ENCODE measurements at regions of chr1 and their contacts with region 1.

Region 1: GRCh38 chr1:214328770-214329469 is 48.0 kb downstream of the SMYD2 start:
- DNase-seq: peak; percentile 68
- H3K4me3 Mint-ChIP-seq: no peak overlapping the region
- H3K27ac Mint-ChIP-seq: no peak overlapping the region
- H3K4me1 Mint-ChIP-seq: peaks cover 15% of the 10 kb centered on the region
- H3K27me3 Mint-ChIP-seq: no peaks in the 10 kb centered on the region

Region 2: GRCh38 chr1:213987927-213988506 is 340.9 kb before region 1 on chr1 and contains the start of gene PROX1:
- intact Hi-C with region 1: loop called (anchors 2 kb)
- DNase-seq: peak; percentile 32
- H3K4me3 Mint-ChIP-seq: peak within 1 kb of the TSS; percentile 86
- H3K27ac Mint-ChIP-seq: peak within 1 kb of the TSS; percentile 77
- H3K4me1 Mint-ChIP-seq: peaks cover 32% of the 10 kb centered on the region
- H3K27me3 Mint-ChIP-seq: peaks cover 81% of the 10 kb centered on the region
- total RNA-seq, gene PROX1: not detected in 2 replicates

Region 3: GRCh38 chr1:214261206-214262123 is 67.5 kb before region 1 on chr1:
- intact Hi-C with region 1: loop called (anchors 1 kb)
- DNase-seq: peak; percentile 69
- H3K4me3 Mint-ChIP-seq: no peak overlapping the region
- H3K27ac Mint-ChIP-seq: no peak overlapping the region
- H3K4me1 Mint-ChIP-seq: peaks cover 27% of the 10 kb centered on the region
- H3K27me3 Mint-ChIP-seq: peaks cover 42% of the 10 kb centered on the region

Region 4: GRCh38 chr1:214386747-214387146 is 57.8 kb after region 1 on chr1:
- intact Hi-C with region 1: loop called (anchors 2 kb)
- DNase-seq: peak; percentile 27
- H3K4me3 Mint-ChIP-seq: peak overlapping the region; percentile 64
- H3K27ac Mint-ChIP-seq: peak overlapping the region; percentile 93
- H3K4me1 Mint-ChIP-seq: peaks cover 40% of the 10 kb centered on the region
- H3K27me3 Mint-ChIP-seq: peaks cover 1% of the 10 kb centered on the region

Region 5: GRCh38 chr1:214584805-214585766 is 256.2 kb after region 1 on chr1:
- intact Hi-C with region 1: loop called (anchors 1 kb)
- DNase-seq: no peak
- H3K4me3 Mint-ChIP-seq: no peak overlapping the region
- H3K27ac Mint-ChIP-seq: no peak overlapping the region
- H3K4me1 Mint-ChIP-seq: peaks cover 10% of the 10 kb centered on the region
- H3K27me3 Mint-ChIP-seq: peaks cover 3% of the 10 kb centered on the region

Region 6: GRCh38 chr1:215526553-215527151 is 1197.7 kb after region 1 on chr1:
- intact Hi-C with region 1: loop called (anchors 2 kb)
- DNase-seq: no peak
- H3K4me3 Mint-ChIP-seq: no peak overlapping the region
- H3K27ac Mint-ChIP-seq: no peak overlapping the region
- H3K4me1 Mint-ChIP-seq: no peaks in the 10 kb centered on the region
- H3K27me3 Mint-ChIP-seq: peaks cover 2% of the 10 kb centered on the region

Measured in activated T-helper 1 cell treated with anti-CD3 and anti-CD28 coated beads, Interleukin-12 subunit alpha, Interleukin-12 subunit beta, Interleukin-2, Interleukin-4 antibody, amounts not matched to agents 30 ng/mL and 10 ng/mL and 1 ng/mL, durations not matched to agents 14 hours and 24 hours and 36 hours (primary cell).